Vagina (tissue), 2 donors: ENCODE measurements at regions of chr2 and their contacts with region 1.

Region 1: GRCh38 chr2:27703638-27704341 is 40.1 kb downstream of the SLC4A1AP start:
- DNase-seq: no peak
- H3K4me3 ChIP-seq: no peak overlapping the region
- H3K27ac ChIP-seq: peak overlapping the region; percentile 87
- H3K4me1 ChIP-seq: peaks cover 23% of the 10 kb centered on the region
- H3K27me3 ChIP-seq: no peaks in the 10 kb centered on the region
- CTCF ChIP-seq: peak; percentile 91 to 95 (median 94)
- POLR2A ChIP-seq: no peak

Region 2: DNA sequence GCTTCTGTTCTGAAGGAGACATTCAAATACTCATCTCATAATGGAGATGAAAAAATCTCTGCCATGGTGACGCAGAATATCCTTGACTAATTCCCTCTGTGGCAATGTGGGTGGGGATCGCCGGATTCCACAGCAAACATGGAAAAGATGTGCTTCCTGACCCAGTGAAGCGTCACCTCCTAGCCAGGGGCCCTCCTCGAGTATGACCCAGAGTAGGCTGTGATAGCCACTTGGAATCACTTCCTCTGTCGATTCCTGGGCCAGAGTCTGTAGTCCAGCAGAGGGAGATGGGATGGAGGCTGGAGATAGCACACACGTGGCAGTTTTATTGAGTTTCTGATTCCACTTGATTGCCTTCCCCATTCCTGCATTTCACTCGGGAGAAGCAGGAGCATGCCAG is 1265.3 kb before region 1 on chr2:
- intact Hi-C with region 1: no loop called
- DNase-seq: no peak
- H3K4me3 ChIP-seq: no peak overlapping the region
- H3K27ac ChIP-seq: no peak overlapping the region
- H3K4me1 ChIP-seq: no peaks in the 10 kb centered on the region
- H3K27me3 ChIP-seq: no peaks in the 10 kb centered on the region
- CTCF ChIP-seq: no peak
- POLR2A ChIP-seq: no peak

Region 3: GRCh38 chr2:27683390-27684071 is 20.3 kb before region 1 on chr2:
- intact Hi-C with region 1: no loop called
- DNase-seq: no peak
- H3K4me3 ChIP-seq: no peak overlapping the region
- H3K27ac ChIP-seq: no peak overlapping the region
- H3K4me1 ChIP-seq: peaks cover 7% of the 10 kb centered on the region
- H3K27me3 ChIP-seq: no peaks in the 10 kb centered on the region
- CTCF ChIP-seq: peak; percentile 68 to 95 (median 94)
- POLR2A ChIP-seq: no peak

Region 4: GRCh38 chr2:27954771-27955383 is 251.1 kb after region 1 on chr2:
- intact Hi-C with region 1: loop called (anchors 10 kb)
- DNase-seq: peak in 1 of 2 donors; percentile 92
- H3K4me3 ChIP-seq: no peak overlapping the region
- H3K27ac ChIP-seq: peak overlapping the region; percentile 70
- H3K4me1 ChIP-seq: peaks cover 49% of the 10 kb centered on the region
- H3K27me3 ChIP-seq: no peaks in the 10 kb centered on the region
- CTCF ChIP-seq: peak; percentile 12 to 49 (median 31)
- POLR2A ChIP-seq: no peak

Region 5: GRCh38 chr2:28445448-28446258 is 741.9 kb after region 1 on chr2:
- intact Hi-C with region 1: loop called (anchors 5 kb)
- DNase-seq: no peak
- H3K4me3 ChIP-seq: no peak overlapping the region
- H3K27ac ChIP-seq: no peak overlapping the region
- H3K4me1 ChIP-seq: peaks cover 51% of the 10 kb centered on the region
- H3K27me3 ChIP-seq: no peaks in the 10 kb centered on the region
- CTCF ChIP-seq: no peak
- POLR2A ChIP-seq: no peak